Common myeloid progenitor, CD34-positive (primary cell): ENCODE measurements at regions of chr6 and their contacts with region 1.

Region 1: DNA sequence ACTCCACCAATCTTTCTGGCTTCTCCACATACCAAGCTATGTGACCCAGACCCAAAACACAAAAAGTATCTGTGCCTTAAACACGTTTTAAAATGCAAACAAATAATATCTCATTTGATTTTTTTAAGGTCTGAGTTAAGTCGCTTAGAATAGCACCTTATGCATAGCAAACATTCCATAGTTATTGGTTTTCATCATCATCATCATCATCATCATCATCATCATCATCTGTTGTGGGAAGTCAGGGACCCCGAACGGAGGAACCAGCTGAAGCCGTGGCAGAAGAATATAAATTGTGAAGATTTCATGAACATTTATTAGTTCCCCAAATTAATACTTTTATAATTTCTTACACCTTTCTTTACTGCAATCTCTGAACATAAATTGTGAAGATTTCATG is 329.3 kb downstream of the KHDRBS2 start:
- DNase-seq: no peak
- H3K4me3 ChIP-seq: no peak overlapping the region
- H3K27ac ChIP-seq: no peak overlapping the region
- H3K4me1 ChIP-seq: no peaks in the 10 kb centered on the region
- H3K27me3 ChIP-seq: no peaks in the 10 kb centered on the region

Region 2: DNA sequence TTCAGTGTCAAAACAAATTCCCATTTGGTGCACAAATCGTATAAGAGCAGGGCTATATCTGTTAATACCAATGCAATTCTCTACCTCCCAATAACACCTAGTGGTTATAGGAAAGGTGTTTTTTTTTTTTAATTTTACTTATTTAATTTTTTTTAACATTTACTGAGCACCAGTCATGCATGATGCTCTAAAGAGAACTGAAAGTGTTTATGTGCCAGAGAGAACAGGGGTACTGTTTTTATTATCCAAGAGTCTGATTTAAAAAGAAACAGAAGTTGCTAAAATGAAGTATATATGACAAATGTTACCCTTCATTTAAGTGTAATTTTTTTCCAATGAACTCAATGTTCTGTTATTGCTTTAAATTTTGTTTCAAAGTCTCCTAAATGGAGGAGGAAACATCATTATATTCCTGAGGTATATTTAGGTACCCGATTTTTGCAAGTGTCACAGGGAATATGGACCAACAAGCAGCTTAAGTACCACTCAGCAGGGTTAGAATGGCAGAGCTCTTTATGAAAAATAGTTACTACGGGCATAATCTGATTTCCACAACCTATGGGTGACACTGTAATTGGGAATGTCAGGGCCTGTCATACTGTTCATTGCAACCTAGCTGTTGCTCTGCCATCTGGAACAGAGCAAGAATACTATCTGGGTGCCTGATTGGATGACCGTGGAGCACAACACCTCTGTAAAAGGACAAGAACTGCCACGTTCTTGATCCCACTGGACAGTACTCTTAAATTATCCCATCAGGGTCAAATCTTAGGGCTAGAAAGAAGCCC is 133.9 kb after region 1 on chr6:
- CTCF ChIA-PET with region 1: no interaction called
- POLR2A ChIA-PET with region 1: interaction called, 10 read pairs
- DNase-seq: no peak
- H3K4me3 ChIP-seq: no peak overlapping the region
- H3K27ac ChIP-seq: no peak overlapping the region
- H3K4me1 ChIP-seq: no peaks in the 10 kb centered on the region
- H3K27me3 ChIP-seq: no peaks in the 10 kb centered on the region